ENCODE measurements at regions of chr1 and their contacts with region 1.

Region 1: GRCh38 chr1:25890239-25891034 is 14.9 kb upstream of the PAQR7 start:
- DNase-seq: peak; percentile 96
- ATAC-seq: peak; percentile 80
- H3K4me3 ChIP-seq: peak overlapping the region; percentile 24 to 51
- H3K27ac ChIP-seq: peak overlapping the region; percentile 94
- H3K4me1 ChIP-seq: peaks cover 57 to 74% of the 10 kb centered on the region in 2 experiments
- H3K27me3 ChIP-seq: no peaks in the 10 kb centered on the region
- CTCF ChIP-seq: no peak
- POLR2A ChIP-seq: no peak
- RAD21 ChIP-seq: no peak

Region 2: DNA sequence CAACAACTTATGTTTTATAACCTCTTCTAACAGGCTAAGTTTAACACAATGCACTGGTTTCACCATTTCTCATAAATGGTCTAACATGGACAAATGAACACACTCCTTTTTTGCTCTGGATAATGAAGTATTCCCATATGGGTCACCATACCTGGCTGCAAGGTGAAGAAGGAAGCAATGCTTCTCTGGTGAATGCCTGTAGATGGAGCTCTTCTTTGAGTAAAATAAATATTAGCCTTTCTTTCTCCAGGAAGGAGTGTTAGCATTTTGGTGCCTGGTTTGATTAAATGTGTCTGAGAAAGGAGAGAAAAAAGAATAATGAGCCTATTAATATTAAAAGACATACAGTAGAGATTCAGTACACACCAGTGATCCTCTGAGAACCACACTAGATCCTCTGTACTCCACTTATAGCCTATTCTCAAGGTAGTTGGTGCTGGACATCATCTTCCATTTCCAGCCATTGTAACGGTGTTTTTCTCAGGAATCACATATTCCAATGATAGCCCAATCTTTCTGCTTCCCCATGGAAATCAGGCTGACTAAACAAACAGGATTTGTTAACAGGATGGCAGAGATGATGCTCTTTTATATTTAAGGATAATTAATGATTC is 53.1 kb before region 1 on chr1:
- CTCF ChIA-PET with region 1: interaction called, 3 read pairs
- POLR2A ChIA-PET with region 1: no interaction called
- RAD21 ChIA-PET with region 1: interaction called in 1 of 2 experiments, 3 read pairs
- intact Hi-C with region 1: loop called (anchors 1 kb)
- DNase-seq: no peak
- ATAC-seq: peak; percentile 88
- H3K4me3 ChIP-seq: no peak overlapping the region
- H3K27ac ChIP-seq: no peak overlapping the region
- H3K4me1 ChIP-seq: peaks cover 0 to 3% of the 10 kb centered on the region in 2 experiments; a peak in 1 of 4 replicates
- H3K27me3 ChIP-seq: no peaks in the 10 kb centered on the region
- CTCF ChIP-seq: peak; percentile 69 to 70 (median 70)
- POLR2A ChIP-seq: no peak
- RAD21 ChIP-seq: peak; percentile 82

Region 3: DNA sequence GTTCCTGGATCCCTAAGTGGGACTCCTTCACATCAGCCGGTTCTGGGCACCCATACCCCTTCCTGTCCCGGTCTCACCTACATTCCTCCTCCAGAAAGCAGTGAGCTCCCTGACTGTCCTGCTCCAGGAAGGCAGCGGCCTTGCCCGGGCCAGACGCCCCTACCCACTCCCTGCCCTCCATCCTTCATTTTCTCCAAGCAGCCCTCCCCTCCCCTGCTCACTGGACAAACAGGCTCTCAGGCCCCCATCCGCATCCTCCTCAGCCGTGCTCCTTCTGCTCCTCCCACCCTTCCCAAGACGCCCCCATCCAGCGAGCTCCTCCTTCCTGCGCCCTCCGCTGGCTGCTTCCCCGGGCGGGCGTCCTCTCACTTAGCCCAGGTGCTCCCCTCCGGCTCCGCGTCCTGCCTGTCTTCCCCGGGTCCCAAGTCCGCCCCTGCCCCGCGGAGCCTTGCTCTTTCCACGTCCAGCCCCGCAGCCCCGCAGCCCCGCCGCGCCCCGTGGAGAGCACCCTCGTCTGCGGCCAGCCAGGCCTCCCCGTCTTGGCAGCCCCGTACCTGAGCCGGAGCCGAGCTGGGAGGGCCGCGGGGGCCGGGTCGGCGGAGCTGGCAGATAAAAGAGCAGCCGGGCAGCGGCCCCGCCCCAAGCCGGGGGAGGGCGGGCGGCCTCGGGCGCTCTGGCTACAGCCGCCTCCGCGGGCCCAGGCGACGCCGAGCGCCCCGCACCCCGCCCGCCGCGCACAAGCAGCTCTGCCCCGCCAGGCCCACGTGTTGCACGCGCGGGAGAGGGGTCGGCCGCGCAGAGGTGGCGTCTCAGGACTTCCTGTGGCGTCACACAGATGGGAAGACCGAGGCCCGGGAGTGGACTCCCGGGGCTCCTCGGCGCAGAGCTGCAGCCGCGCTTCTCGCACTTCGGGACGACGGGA is 15.2 kb before region 1 on chr1 and contains the start of gene PAQR7:
- CTCF ChIA-PET with region 1: interaction called, 5 read pairs
- POLR2A ChIA-PET with region 1: interaction called, 31 read pairs
- RAD21 ChIA-PET with region 1: interaction called, 3 to 6 read pairs
- intact Hi-C with region 1: no loop called
- DNase-seq: no peak
- ATAC-seq: peak; percentile 83
- H3K4me3 ChIP-seq: peak within 1 kb of the TSS; percentile 77 to 78
- H3K27ac ChIP-seq: peak within 1 kb of the TSS; percentile 81
- H3K4me1 ChIP-seq: peaks cover 35 to 67% of the 10 kb centered on the region in 2 experiments
- H3K27me3 ChIP-seq: no peaks in the 10 kb centered on the region
- CTCF ChIP-seq: no peak
- POLR2A ChIP-seq: peak; percentile 70
- RAD21 ChIP-seq: no peak
- total RNA-seq, gene PAQR7: 13.1 TPM